Activated CD4-positive, alpha-beta memory T cell treated with anti-CD3 and anti-CD28 coated beads for 36 hours (primary cell): ENCODE measurements at regions of chr7 and their contacts with region 1.

Region 1: DNA sequence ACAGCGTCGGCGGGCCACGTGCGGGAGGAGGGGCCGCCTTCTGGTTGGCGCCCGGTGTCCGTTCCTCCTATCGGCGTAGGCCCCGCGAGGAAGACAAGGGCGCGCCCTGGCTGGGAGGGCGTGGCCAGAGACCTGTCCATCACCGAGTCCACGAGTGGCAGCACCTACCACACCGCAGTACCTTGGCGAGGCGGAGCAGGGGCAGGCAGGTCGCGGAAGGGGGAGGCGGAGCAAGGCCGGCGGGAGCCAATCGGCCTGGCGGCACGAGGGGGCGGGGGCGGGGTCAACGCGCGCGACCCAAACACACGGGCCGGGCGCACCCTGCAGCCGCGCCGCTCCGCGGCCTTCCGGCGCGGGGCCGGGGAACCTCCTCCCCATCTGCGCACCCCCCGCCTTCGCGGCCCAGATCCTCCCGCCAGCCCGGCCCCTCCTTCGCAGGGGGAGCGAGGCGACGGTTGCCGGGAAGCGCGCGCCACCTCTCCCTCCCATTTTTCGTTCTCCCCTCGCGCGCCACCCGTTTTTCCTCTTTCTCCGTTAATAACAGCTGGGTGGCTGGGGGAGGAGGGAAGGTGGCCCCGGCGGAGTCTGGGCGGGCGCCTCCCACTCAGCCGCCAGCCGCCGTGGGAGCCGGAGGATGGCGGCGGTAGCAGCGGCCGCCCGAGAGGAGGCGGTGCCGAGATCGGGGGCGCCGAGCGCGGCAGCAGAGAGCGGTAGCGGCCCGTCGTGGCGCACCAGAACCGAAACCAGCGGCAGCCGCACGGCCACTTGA is at the start of gene ZNRF2:
- DNase-seq: peak; percentile 100
- H3K4me3 Mint-ChIP-seq: peak within 1 kb of the TSS; percentile 78
- H3K27ac Mint-ChIP-seq: peak within 1 kb of the TSS; percentile 90
- H3K4me1 Mint-ChIP-seq: peaks cover 47% of the 10 kb centered on the region
- H3K27me3 Mint-ChIP-seq: no peaks in the 10 kb centered on the region
- total RNA-seq, gene ZNRF2: 9.6 to 10.5 TPM

Region 2: DNA sequence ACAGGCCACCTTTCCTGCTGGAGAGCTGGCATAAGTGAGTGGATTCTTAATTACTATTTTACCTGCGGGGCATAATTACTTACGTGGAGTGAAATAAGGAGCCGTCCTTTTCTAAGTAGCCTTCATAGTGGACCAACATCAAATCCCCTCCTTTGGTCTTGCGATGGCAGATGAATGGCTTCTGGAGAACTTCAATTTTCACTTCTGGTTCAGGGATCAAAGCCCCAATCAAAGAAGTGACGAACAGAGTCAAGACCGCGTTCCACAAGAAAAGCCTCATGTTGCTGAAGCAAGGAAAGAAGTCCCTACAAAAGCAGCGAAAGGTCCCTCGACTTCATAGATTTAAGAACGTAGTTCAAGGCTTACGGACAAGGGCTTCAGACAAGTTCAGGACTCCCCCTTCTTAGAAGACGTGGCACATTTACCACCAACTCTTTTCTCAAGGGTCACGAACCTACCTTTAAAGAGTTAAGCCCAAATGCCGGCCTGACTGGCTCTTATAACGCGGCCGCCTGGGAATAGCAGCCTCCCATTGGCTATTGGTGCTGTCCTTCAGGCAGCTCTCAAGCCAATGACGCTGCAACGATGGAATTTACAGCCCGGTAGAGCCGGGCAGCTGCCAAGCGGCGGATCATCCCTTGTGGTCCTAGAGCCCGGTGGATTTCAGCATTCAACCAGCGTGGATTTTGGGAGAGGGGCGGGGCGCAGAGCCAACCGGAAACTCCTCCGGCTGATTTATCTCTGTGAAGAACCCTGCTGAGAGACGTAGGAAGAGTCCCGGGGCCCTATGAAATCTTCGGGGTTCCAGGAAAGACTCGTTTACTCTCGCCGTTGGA is 258.0 kb before region 1 on chr7 and contains the start of gene FKBP14:
- CTCF ChIA-PET with region 1: no interaction called
- POLR2A ChIA-PET with region 1: no interaction called
- intact Hi-C with region 1: loop called (anchors 1 kb)
- DNase-seq: peak; percentile 96
- H3K4me3 Mint-ChIP-seq: no peak within 1 kb of the TSS
- H3K27ac Mint-ChIP-seq: peak within 1 kb of the TSS; percentile 75
- H3K4me1 Mint-ChIP-seq: peaks cover 32% of the 10 kb centered on the region
- H3K27me3 Mint-ChIP-seq: no peaks in the 10 kb centered on the region
- total RNA-seq, gene FKBP14: 6.3 to 7.9 TPM

Region 3: DNA sequence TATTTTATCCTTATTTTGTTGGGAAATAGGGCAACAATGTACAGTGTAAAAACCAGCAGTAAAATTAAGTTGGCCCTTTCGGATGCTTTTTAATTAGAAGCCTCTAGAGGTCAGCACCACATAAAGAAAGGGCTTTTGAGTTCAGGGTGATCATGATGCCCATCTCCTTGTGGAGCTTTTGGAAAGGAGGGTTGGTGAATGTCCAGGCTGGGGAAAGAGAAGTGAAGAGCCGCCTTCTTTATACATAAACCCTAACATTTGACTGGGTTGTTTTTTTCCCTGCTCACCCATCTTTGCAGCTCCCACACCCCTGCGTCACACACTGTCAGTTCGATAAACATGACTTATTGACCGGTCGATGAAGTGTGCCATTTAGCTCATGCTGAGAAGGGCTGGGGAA is 119.9 kb before region 1 on chr7:
- CTCF ChIA-PET with region 1: interaction called, 3 read pairs
- POLR2A ChIA-PET with region 1: no interaction called
- intact Hi-C with region 1: loop called (anchors 2 kb)
- DNase-seq: no peak
- H3K4me3 Mint-ChIP-seq: no peak overlapping the region
- H3K27ac Mint-ChIP-seq: no peak overlapping the region
- H3K4me1 Mint-ChIP-seq: peaks cover 24% of the 10 kb centered on the region
- H3K27me3 Mint-ChIP-seq: no peaks in the 10 kb centered on the region

Region 4: GRCh38 chr7:30330134-30331111 is 45.9 kb after region 1 on chr7:
- CTCF ChIA-PET with region 1: no interaction called
- POLR2A ChIA-PET with region 1: no interaction called
- intact Hi-C with region 1: loop called (anchors 1 kb)
- DNase-seq: peak; percentile 41
- H3K4me3 Mint-ChIP-seq: peak overlapping the region; percentile 27
- H3K27ac Mint-ChIP-seq: peak overlapping the region; percentile 19
- H3K4me1 Mint-ChIP-seq: peaks cover 62% of the 10 kb centered on the region
- H3K27me3 Mint-ChIP-seq: no peaks in the 10 kb centered on the region

Region 5: GRCh38 chr7:30433082-30433481 is 148.6 kb after region 1 on chr7:
- CTCF ChIA-PET with region 1: no interaction called
- POLR2A ChIA-PET with region 1: no interaction called
- intact Hi-C with region 1: no loop called
- DNase-seq: no peak
- H3K4me3 Mint-ChIP-seq: no peak overlapping the region
- H3K27ac Mint-ChIP-seq: no peak overlapping the region
- H3K4me1 Mint-ChIP-seq: no peaks in the 10 kb centered on the region
- H3K27me3 Mint-ChIP-seq: no peaks in the 10 kb centered on the region

Region 6: DNA sequence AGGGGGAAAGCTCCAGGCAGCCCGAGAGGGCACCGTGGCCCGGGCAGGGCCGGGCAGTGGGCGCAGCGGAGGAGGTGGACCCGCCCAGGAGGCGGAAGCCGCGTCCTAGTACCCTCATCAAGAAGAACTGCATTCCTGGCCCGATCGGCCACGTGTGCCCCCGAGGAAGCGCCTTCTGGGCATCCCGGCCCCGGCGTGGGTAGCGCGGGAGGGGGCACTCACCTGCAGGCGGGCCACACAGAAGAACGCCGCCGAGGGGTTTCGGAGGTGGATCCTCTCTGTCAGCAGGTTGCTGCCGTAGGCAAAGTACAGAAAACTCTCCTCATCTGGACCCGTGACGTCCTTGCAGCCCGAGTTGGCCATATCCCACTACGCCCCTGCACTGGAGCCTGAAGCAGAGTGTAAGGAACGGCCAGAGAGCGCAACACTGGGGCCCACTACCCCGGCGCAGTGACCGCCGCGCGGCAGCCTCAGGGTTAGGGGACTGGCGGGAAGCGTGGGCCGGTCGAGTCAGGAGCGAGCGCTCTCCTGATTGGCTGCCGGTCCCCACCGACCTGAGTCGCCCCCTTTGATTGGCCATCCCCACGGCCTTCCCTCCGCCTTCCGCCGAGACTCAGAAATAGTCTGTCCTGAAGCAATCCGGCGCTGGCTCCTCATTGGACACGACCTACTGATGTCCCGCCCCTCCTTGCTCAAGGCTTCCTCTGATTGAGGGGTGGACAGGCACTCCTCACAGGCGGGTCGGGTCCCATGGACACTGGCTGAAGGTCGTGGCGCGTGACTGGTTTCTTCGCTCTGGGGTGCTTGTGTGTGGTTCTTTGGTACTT is 220.1 kb after region 1 on chr7 and contains the start of gene GGCT:
- CTCF ChIA-PET with region 1: no interaction called
- POLR2A ChIA-PET with region 1: no interaction called
- intact Hi-C with region 1: loop called (anchors 2 kb)
- DNase-seq: peak; percentile 99
- H3K4me3 Mint-ChIP-seq: peak within 1 kb of the TSS; percentile 77
- H3K27ac Mint-ChIP-seq: peak within 1 kb of the TSS; percentile 79
- H3K4me1 Mint-ChIP-seq: peaks cover 38% of the 10 kb centered on the region
- H3K27me3 Mint-ChIP-seq: no peaks in the 10 kb centered on the region
- total RNA-seq, gene GGCT: 60.5 to 68.0 TPM